Heart right ventricle (tissue), 16 donors: ENCODE measurements at regions of chr7 and their contacts with region 1.

Region 1: GRCh38 chr7:99200691-99201440 is 7.0 kb downstream of the KPNA7 start:
- DNase-seq: no peak
- ATAC-seq: no peak
- H3K4me3 ChIP-seq: no peak overlapping the region
- H3K27ac ChIP-seq: no peak overlapping the region
- H3K4me1 ChIP-seq: no peaks in the 10 kb centered on the region
- H3K27me3 ChIP-seq: no peaks in the 10 kb centered on the region
- CTCF ChIP-seq: no peak

Region 2: DNA sequence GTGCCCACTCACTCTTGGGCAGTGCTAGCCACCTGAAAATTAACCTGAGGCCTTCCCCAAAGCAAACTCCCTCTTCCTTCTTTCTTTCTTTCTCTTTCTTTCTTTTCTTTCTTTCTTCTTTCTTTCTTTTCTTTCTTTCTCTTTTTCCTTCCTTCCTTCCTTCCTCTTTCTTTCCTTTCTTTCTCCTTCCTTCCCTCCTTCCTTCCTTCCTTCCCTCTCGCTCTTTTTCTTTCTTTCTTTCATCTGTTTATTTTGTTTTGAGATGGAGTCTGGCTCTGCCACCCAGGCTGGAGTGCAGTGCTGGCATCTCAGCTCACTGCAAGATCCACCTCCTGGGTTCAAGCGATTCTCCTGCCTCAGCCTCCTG is 24.0 kb after region 1 on chr7:
- intact Hi-C with region 1: loop called in 1 of 10 experiments (anchors 2 kb)
- DNase-seq: no peak
- ATAC-seq: no peak
- H3K4me3 ChIP-seq: no peak overlapping the region
- H3K27ac ChIP-seq: no peak overlapping the region
- H3K4me1 ChIP-seq: peaks cover 0 to 3% (median 0%) of the 10 kb centered on the region in 9 donors
- H3K27me3 ChIP-seq: no peaks in the 10 kb centered on the region
- CTCF ChIP-seq: no peak